ENCODE measurements at regions of chr21 and their contacts with region 1.

Region 1: DNA sequence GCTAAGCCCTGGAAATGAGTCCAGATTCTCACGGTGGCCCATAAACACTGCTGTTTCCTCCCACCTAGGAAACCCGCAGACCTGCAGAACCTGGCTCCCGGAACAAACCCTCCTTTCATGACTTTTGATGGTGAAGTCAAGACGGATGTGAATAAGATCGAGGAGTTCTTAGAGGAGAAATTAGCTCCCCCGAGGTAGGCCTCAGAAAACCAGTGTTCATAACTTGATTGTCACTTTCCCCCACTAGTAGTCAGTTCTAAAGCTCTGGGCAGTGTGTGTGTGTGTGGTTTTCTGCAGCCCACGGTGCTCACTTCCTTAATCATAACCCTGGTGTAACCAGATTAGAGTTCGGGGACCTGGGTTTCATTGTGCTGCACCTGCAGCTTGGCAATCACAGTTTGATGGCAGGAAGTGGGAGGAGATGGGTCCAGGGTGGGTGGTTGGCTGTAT is 39.1 kb downstream of the CLIC6 start:
- DNase-seq: peak; percentile 28 to 45 (median 39)
- H3K4me3 ChIP-seq: peak overlapping the region in 1 of 2 donors; percentile 11
- H3K4me3 Mint-ChIP-seq: peak overlapping the region in 7 of 8 donors; percentile 35 to 72 (median 64)
- H3K27ac ChIP-seq: no peak overlapping the region
- H3K27ac Mint-ChIP-seq: peak overlapping the region in 6 of 7 donors; percentile 13 to 90 (median 39)
- H3K4me1 ChIP-seq: peaks cover 18% of the 10 kb centered on the region
- H3K4me1 Mint-ChIP-seq: peaks cover 13 to 22% (median 17%) of the 10 kb centered on the region in 4 donors
- H3K27me3 ChIP-seq: no peaks in the 10 kb centered on the region
- H3K27me3 Mint-ChIP-seq: peaks cover 2 to 5% of the 10 kb centered on the region in 2 donors

Region 2: DNA sequence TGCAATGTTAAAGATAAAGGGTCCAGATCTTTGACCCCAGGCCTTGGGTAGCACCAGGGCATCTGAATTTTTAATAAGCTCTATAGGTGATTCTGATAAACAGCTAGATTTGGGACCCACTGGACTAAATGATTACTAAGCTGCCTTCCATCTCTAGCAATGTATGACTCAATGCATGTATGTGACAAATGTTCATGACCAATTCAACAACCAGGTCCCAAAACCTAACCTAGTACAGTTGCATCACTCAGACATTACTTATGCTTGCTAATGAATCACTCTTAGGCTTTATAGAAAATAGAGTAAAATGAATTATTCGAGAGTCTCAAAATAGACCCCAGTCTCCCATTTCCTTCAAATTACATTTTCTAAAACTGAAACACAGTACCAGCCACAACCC is 128.5 kb before region 1 on chr21:
- CTCF ChIA-PET with region 1: no interaction called
- POLR2A ChIA-PET with region 1: no interaction called
- intact Hi-C with region 1: no loop called
- DNase-seq: no peak
- H3K4me3 ChIP-seq: no peak overlapping the region
- H3K4me3 Mint-ChIP-seq: no peak overlapping the region
- H3K27ac ChIP-seq: no peak overlapping the region
- H3K27ac Mint-ChIP-seq: no peak overlapping the region
- H3K4me1 ChIP-seq: no peaks in the 10 kb centered on the region
- H3K4me1 Mint-ChIP-seq: peaks cover 4 to 15% (median 6%) of the 10 kb centered on the region in 4 donors
- H3K27me3 ChIP-seq: no peaks in the 10 kb centered on the region
- H3K27me3 Mint-ChIP-seq: no peaks in the 10 kb centered on the region

Region 3: DNA sequence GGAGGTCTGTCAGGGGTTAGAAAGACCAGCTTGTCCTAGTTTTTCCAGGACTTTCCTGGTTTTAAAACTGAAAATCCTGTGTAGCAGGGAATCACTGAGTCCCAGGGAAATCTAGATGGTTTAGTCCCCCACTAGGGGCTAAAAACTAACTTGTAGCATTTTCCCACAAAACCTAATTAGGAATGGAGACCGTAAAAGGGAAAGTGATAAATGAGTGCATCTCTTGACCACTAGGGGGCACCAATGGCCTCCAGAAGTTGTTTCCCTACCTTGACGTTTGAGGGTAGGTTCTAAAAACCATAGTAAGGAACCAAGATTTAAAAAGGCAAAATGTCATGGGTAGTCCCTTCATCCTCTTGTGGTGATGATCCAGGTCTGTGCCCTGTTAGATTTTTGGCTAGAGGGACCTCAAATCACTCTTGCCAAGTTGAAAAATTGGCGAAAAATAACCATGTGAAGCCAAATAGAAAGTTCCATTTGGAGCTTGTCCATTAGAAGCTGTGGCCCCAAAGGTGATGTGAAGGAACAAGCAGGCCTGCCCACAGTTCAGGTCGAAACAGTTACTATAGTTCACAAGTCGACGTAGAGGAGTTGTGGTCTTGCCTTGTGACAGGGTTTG is 14.6 kb before region 1 on chr21:
- CTCF ChIA-PET with region 1: interaction called, 47 read pairs
- POLR2A ChIA-PET with region 1: no interaction called
- intact Hi-C with region 1: no loop called
- DNase-seq: peak in 4 of 5 donors; percentile 42 to 57 (median 50)
- H3K4me3 ChIP-seq: no peak overlapping the region
- H3K4me3 Mint-ChIP-seq: no peak overlapping the region
- H3K27ac ChIP-seq: no peak overlapping the region
- H3K27ac Mint-ChIP-seq: no peak overlapping the region
- H3K4me1 ChIP-seq: no peaks in the 10 kb centered on the region
- H3K4me1 Mint-ChIP-seq: peaks cover 0 to 4% (median 0%) of the 10 kb centered on the region in 4 donors
- H3K27me3 ChIP-seq: no peaks in the 10 kb centered on the region
- H3K27me3 Mint-ChIP-seq: peaks cover 13 to 27% of the 10 kb centered on the region in 2 donors

Region 4: GRCh38 chr21:34730756-34731445 is 23.0 kb after region 1 on chr21:
- CTCF ChIA-PET with region 1: no interaction called
- POLR2A ChIA-PET with region 1: no interaction called
- intact Hi-C with region 1: no loop called
- DNase-seq: no peak
- H3K4me3 ChIP-seq: no peak overlapping the region
- H3K4me3 Mint-ChIP-seq: no peak overlapping the region
- H3K27ac ChIP-seq: no peak overlapping the region
- H3K27ac Mint-ChIP-seq: no peak overlapping the region
- H3K4me1 ChIP-seq: no peaks in the 10 kb centered on the region
- H3K4me1 Mint-ChIP-seq: no peaks in the 10 kb centered on the region
- H3K27me3 ChIP-seq: no peaks in the 10 kb centered on the region
- H3K27me3 Mint-ChIP-seq: peaks cover 4 to 5% of the 10 kb centered on the region in 2 donors

Measured in CD4-positive, alpha-beta memory T cell (primary cell).